Naive thymus-derived CD4-positive, alpha-beta T cell (primary cell): ENCODE measurements at regions of chr7 and their contacts with region 1.

Region 1: GRCh38 chr7:104627516-104627915 is 299.1 kb downstream of the LHFPL3 start:
- DNase-seq: no peak
- ATAC-seq: no peak
- H3K4me3 ChIP-seq: no peak overlapping the region
- H3K4me3 Mint-ChIP-seq: no peak overlapping the region
- H3K27ac ChIP-seq: no peak overlapping the region
- H3K27ac Mint-ChIP-seq: no peak overlapping the region
- H3K4me1 ChIP-seq: no peaks in the 10 kb centered on the region
- H3K4me1 Mint-ChIP-seq: no peaks in the 10 kb centered on the region
- H3K27me3 ChIP-seq: no peaks in the 10 kb centered on the region
- H3K27me3 Mint-ChIP-seq: peaks cover 0 to 29% (median 22%) of the 10 kb centered on the region in 5 donors

Region 2: GRCh38 chr7:104552102-104552501 is 75.4 kb before region 1 on chr7:
- CTCF ChIA-PET with region 1: no interaction called
- POLR2A ChIA-PET with region 1: no interaction called
- intact Hi-C with region 1: loop called in 1 of 2 experiments (anchors 5 kb)
- DNase-seq: peak in 1 of 9 donors; percentile 22
- ATAC-seq: no peak
- H3K4me3 ChIP-seq: no peak overlapping the region
- H3K4me3 Mint-ChIP-seq: no peak overlapping the region
- H3K27ac ChIP-seq: no peak overlapping the region
- H3K27ac Mint-ChIP-seq: no peak overlapping the region
- H3K4me1 ChIP-seq: no peaks in the 10 kb centered on the region
- H3K4me1 Mint-ChIP-seq: no peaks in the 10 kb centered on the region
- H3K27me3 ChIP-seq: no peaks in the 10 kb centered on the region
- H3K27me3 Mint-ChIP-seq: peaks cover 0 to 16% (median 5%) of the 10 kb centered on the region in 5 donors